Common myeloid progenitor, CD34-positive (primary cell): ENCODE measurements at regions of chr2 and their contacts with region 1.

Region 1: GRCh38 chr2:28346587-28346986 is 46.1 kb upstream of the FOSL2 start:
- DNase-seq: no peak
- H3K4me3 ChIP-seq: no peak overlapping the region
- H3K27ac ChIP-seq: no peak overlapping the region
- H3K4me1 ChIP-seq: peaks cover 3 to 21% (median 15%) of the 10 kb centered on the region in 4 experiments
- H3K27me3 ChIP-seq: no peaks in the 10 kb centered on the region

Region 2: DNA sequence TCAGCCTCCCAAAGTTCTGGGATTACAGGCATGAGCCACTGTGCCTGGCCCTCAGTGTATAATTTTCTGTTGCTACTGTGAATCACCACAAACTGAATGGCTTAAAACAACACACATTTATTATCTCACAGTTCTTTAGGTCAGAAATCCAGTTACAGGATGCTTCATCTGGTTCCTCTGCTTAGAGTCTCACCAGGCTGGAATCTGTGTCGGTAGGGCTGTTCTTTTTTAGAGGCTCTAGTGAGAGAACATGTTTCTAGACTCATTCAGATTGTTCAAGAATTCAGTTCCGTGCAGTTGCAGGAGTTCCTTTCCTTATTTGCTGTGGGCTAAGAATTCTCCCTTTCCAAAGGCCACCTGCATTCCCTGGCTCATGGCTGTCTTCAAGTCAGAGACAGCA is 740.0 kb before region 1 on chr2:
- CTCF ChIA-PET with region 1: no interaction called
- POLR2A ChIA-PET with region 1: no interaction called
- DNase-seq: no peak
- H3K4me3 ChIP-seq: no peak overlapping the region
- H3K27ac ChIP-seq: no peak overlapping the region
- H3K4me1 ChIP-seq: no peaks in the 10 kb centered on the region
- H3K27me3 ChIP-seq: no peaks in the 10 kb centered on the region

Region 3: GRCh38 chr2:28366496-28367282 is 20.1 kb after region 1 on chr2:
- CTCF ChIA-PET with region 1: interaction called, 10 read pairs
- POLR2A ChIA-PET with region 1: interaction called, 6 read pairs
- DNase-seq: peak; percentile 95 to 98 (median 97)
- H3K4me3 ChIP-seq: peak overlapping the region in 4 of 7 experiments; percentile 28 to 59 (median 36)
- H3K27ac ChIP-seq: peak overlapping the region in 1 of 2 experiments; percentile 65
- H3K4me1 ChIP-seq: peaks cover 0 to 82% (median 76%) of the 10 kb centered on the region in 4 experiments
- H3K27me3 ChIP-seq: no peaks in the 10 kb centered on the region

Region 4: GRCh38 chr2:28880193-28880592 is 533.6 kb after region 1 on chr2:
- CTCF ChIA-PET with region 1: no interaction called
- POLR2A ChIA-PET with region 1: no interaction called
- DNase-seq: no peak
- H3K4me3 ChIP-seq: no peak overlapping the region
- H3K27ac ChIP-seq: no peak overlapping the region
- H3K4me1 ChIP-seq: no peaks in the 10 kb centered on the region
- H3K27me3 ChIP-seq: peaks cover 2 to 17% (median 10%) of the 10 kb centered on the region in 5 experiments